Common myeloid progenitor, CD34-positive (primary cell): ENCODE measurements at regions of chr10 and their contacts with region 1.

Region 1: DNA sequence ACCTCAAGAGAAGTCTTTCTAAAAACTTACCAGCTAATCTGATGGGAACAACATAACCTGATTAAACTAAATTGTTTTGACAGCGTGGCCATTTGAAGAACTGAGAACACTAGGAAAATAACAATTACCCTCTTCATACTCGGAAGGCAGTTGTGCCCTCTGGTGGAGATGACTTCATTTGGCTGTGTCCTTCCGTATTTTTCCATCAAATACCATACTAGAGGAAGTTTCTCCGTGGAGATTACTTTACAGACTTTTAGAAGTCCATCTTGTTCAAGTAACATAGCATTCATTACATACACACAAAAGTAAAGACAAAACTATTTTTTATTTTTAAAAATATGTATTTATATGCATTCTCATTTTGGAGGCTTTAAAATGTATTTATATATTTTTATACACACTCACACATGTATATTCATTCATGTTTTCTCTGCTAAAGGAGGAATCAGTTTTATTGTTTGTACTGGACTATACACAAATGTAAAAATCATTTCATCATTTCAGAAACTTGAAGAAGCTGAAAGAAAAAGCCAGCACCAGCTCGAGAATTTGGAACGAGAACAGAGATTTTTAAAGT is 25.2 kb downstream of the SMNDC1 start:
- DNase-seq: peak; percentile 81 to 87 (median 86)
- H3K4me3 ChIP-seq: peak overlapping the region in 1 of 7 experiments; percentile 42
- H3K27ac ChIP-seq: no peak overlapping the region
- H3K4me1 ChIP-seq: peaks cover 0 to 11% (median 5%) of the 10 kb centered on the region in 4 experiments
- H3K27me3 ChIP-seq: no peaks in the 10 kb centered on the region

Region 2: GRCh38 chr10:109987452-109988211 is 291.9 kb before region 1 on chr10:
- CTCF ChIA-PET with region 1: no interaction called
- POLR2A ChIA-PET with region 1: no interaction called
- DNase-seq: no peak
- H3K4me3 ChIP-seq: no peak overlapping the region
- H3K27ac ChIP-seq: no peak overlapping the region
- H3K4me1 ChIP-seq: peaks cover 0 to 3% (median under 1%) of the 10 kb centered on the region in 4 experiments
- H3K27me3 ChIP-seq: no peaks in the 10 kb centered on the region

Region 3: GRCh38 chr10:110137142-110137545 is 142.4 kb before region 1 on chr10:
- CTCF ChIA-PET with region 1: interaction called, 72 read pairs
- POLR2A ChIA-PET with region 1: no interaction called
- DNase-seq: peak; percentile 80 to 93 (median 90)
- H3K4me3 ChIP-seq: peak overlapping the region in 1 of 7 experiments; percentile 43
- H3K27ac ChIP-seq: no peak overlapping the region
- H3K4me1 ChIP-seq: peaks cover 12 to 20% (median 18%) of the 10 kb centered on the region in 4 experiments
- H3K27me3 ChIP-seq: peaks cover 0 to 2% (median 0%) of the 10 kb centered on the region in 5 experiments

Region 4: DNA sequence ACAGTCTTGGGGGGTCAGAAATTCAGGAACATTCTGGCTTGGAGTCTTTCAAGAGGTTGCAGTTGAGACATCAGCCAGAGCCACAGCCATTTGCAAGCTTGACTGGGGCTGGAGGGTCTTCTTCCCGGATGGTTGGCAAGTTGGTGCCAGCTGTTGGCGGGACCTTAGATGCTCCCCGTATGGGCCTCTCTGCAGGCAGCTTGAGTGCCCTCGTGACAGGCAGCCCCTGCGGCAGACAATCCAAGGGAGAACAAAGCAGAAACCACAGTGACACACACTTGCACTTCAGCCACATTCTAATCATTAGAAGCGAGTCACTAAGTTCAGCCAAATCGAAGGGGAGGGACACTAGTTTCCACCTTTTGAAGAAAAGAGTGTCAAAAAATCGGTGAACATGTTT is 131.5 kb before region 1 on chr10:
- CTCF ChIA-PET with region 1: interaction called, 29 read pairs
- POLR2A ChIA-PET with region 1: no interaction called
- DNase-seq: peak; percentile 36 to 94 (median 87)
- H3K4me3 ChIP-seq: no peak overlapping the region
- H3K27ac ChIP-seq: no peak overlapping the region
- H3K4me1 ChIP-seq: peaks cover 0 to 4% (median 0%) of the 10 kb centered on the region in 4 experiments
- H3K27me3 ChIP-seq: peaks cover 2 to 91% (median 38%) of the 10 kb centered on the region in 5 experiments

Region 5: GRCh38 chr10:110210674-110211464 is 68.6 kb before region 1 on chr10:
- CTCF ChIA-PET with region 1: interaction called, 13 read pairs
- POLR2A ChIA-PET with region 1: no interaction called
- DNase-seq: peak; percentile 89 to 92 (median 90)
- H3K4me3 ChIP-seq: peak overlapping the region; percentile 37 to 84 (median 68)
- H3K27ac ChIP-seq: peak overlapping the region in 1 of 2 experiments; percentile 66
- H3K4me1 ChIP-seq: peaks cover 26 to 82% (median 69%) of the 10 kb centered on the region in 4 experiments
- H3K27me3 ChIP-seq: peaks cover 3 to 56% (median 25%) of the 10 kb centered on the region in 5 experiments

Region 6: DNA sequence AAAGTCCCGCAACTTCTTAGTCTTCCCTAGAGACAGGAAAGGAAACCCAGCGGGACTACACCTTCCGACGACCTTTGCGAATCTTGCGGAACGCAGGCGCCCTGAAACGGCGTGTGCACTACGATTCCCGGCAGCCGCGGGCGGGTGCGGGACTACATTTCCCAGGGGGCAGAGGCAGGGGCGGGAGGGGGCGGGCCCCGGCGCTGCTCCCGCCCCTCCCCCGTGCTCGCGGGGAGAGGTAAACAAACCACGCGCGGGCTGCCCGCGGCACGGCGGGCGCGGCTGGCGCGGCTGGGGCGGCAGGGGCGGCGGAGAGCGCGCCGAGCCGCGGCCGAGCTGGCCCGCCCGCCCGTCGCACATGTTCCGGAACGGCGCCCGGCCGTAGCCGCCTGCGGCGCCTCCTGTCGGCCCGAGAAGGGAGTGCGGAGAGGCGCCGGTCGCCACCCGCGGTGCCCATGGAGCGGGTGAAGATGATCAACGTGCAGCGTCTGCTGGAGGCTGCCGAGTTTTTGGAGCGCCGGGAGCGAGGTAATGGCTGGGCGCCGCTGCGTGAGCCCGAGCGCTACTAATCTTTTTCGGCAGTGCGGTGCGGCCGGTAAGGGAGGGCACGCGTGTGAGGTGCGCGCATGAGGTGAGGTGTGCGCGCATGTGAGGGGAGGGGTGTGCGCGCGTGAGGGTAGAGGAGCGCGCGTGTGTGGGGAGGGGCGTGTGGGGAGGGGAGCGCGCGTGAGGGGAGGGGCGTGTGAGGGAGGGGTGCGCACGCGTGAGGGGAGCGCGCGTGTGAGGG is 53.5 kb before region 1 on chr10:
- CTCF ChIA-PET with region 1: interaction called, 17 read pairs
- POLR2A ChIA-PET with region 1: no interaction called
- DNase-seq: peak; percentile 90 to 93 (median 93)
- H3K4me3 ChIP-seq: peak overlapping the region; percentile 71 to 95 (median 82)
- H3K27ac ChIP-seq: peak overlapping the region in 1 of 2 experiments; percentile 43
- H3K4me1 ChIP-seq: peaks cover 17 to 34% (median 23%) of the 10 kb centered on the region in 4 experiments
- H3K27me3 ChIP-seq: peaks cover 0 to 4% (median 0%) of the 10 kb centered on the region in 5 experiments

Region 7: DNA sequence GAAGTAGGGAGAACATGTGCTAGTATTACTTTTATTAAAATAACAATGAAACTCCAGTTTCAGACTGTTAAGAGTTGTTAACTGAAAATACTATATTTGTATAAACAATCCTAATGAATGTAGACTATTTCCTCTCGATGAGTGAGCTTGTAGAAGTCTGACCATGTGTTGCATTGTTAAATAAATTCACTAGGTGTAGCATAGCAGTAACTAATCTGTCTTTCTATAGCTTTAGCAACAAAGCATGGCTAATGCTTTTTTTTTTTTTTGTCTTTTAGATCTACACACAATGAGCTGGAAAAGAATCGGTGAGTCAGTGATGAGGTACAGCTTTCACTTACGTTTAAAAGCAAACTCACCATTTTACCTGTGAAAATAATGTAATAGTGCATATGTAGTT is 34.9 kb before region 1 on chr10:
- CTCF ChIA-PET with region 1: interaction called, 10 read pairs
- POLR2A ChIA-PET with region 1: no interaction called
- DNase-seq: no peak
- H3K4me3 ChIP-seq: no peak overlapping the region
- H3K27ac ChIP-seq: no peak overlapping the region
- H3K4me1 ChIP-seq: no peaks in the 10 kb centered on the region
- H3K27me3 ChIP-seq: no peaks in the 10 kb centered on the region